ENCODE measurements at regions of chr7 and their contacts with region 1.

Region 1: DNA sequence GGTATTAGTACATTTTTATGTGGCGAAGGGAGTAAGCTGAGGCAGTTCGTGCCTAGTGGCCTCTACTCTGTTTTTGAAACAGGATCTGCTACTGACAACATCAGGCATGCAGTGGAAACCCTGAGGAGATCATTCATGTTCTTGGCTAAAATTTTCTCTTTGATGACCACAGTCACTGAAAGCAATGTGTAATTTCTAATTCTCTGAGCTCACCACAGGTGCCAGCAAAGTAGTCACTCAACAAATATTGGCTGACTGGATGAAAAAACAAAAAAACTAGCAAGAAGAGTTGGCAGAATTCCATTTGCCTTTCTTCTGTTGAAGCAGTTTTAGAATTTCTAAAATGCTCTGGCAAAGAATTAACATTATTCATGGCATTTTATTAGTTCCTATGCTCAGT is 176.5 kb upstream of the KCTD7 start:
- DNase-seq: no peak
- H3K4me3 ChIP-seq: no peak overlapping the region
- H3K27ac ChIP-seq: no peak overlapping the region
- H3K4me1 ChIP-seq: no peaks in the 10 kb centered on the region
- H3K27me3 ChIP-seq: no peaks in the 10 kb centered on the region
- CTCF ChIP-seq: no peak

Region 2: GRCh38 chr7:66016129-66016457 is 436.1 kb before region 1 on chr7:
- intact Hi-C with region 1: loop called (anchors 5 kb)
- DNase-seq: no peak
- H3K4me3 ChIP-seq: no peak overlapping the region
- H3K27ac ChIP-seq: no peak overlapping the region
- H3K4me1 ChIP-seq: no peaks in the 10 kb centered on the region
- H3K27me3 ChIP-seq: no peaks in the 10 kb centered on the region
- CTCF ChIP-seq: no peak

Region 3: DNA sequence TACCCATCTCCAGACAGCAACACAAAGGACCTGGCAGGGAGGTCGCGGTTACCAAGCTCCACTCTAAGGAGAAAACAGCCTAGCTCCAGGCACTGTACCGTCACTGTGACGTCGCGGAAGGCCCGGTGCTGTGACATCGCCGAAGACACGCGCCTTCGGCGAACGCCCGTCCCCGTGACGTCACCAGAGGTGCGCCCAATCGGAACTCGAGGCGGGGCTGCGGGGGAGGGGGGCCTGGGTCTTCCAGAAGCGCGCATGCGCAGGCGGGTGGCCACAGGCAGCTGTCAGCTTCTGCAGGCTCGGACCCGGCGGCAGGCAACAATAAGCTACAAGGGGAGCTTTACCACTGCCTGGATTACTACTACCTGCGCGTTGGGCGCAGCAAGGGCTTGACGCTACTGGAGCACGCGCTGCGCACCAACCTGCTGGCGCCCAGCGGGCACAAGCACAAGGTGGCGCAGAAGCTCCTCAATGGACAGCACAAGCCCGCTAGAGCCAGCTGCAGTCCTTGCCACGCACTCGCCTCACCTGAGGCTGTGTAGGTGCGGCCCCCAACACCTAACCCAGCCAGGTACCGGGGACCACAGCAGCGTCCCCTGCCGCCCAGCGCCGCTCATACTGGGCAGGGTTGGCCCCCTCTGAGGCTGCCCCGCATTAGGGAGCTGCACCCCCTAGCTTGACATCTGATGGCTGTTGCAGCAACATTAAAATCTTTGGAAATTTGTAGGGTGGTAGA is 38.6 kb before region 1 on chr7:
- intact Hi-C with region 1: no loop called
- DNase-seq: peak; percentile 33 to 88
- H3K4me3 ChIP-seq: peak overlapping the region; percentile 57 to 72
- H3K27ac ChIP-seq: no peak overlapping the region
- H3K4me1 ChIP-seq: peaks cover 0 to 3% of the 10 kb centered on the region in 2 donors
- H3K27me3 ChIP-seq: no peaks in the 10 kb centered on the region
- CTCF ChIP-seq: peak in 2 of 3 experiments; percentile 24 to 40

Region 4: GRCh38 chr7:66697449-66698438 is 245.6 kb after region 1 on chr7:
- intact Hi-C with region 1: no loop called
- DNase-seq: peak in 1 of 2 donors; percentile 83
- H3K4me3 ChIP-seq: peak overlapping the region in 1 of 2 donors; percentile 11
- H3K27ac ChIP-seq: peak overlapping the region; percentile 76 to 77
- H3K4me1 ChIP-seq: peaks cover 6 to 17% of the 10 kb centered on the region in 2 donors
- H3K27me3 ChIP-seq: no peaks in the 10 kb centered on the region
- CTCF ChIP-seq: no peak